ENCODE measurements at regions of chr5 and their contacts with region 1.

Region 1: DNA sequence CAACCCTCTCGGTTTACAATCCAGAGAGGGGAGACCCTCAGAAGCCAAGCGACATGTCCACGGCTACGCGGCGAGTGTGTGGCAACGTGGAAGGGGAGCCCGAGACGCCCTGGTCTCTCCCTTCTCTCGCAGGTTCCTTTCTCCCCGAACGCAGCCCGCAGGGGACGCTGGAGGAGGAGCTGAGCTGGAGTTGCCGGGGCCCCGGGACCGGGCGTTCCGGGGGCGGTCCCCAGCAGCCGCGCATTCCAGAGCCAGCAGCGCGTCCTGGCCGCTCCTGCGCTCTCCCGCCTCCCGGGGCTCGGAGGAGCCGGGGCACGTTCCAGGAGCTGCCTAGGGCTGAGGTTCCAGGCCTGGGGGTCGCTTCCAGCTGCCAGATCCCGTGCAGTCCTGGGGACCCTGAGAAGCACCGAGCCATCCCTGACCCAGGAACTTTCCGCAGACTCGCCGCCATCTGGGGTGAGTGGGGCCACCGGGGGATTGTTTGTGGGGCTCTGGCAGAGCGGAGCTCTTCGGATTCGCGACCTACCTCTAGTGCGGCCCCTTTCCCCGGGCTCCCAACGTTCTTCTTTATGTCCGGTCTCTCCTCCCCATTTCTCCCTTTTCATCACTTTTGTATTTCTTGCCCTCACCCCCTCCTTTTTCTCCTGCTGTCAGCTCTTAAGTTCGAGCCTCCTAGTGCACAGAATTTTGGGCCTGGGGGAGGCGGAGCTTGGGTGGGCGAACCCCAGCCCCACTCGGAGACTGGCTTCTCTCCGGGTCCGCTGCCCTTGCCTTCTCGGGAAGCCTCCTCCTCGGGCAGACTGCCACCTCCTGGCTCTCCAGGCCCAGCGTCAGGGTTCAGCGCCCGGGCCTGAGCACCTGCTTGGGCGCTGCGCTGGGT is at the start of gene SMIM3:
- DNase-seq: peak; percentile 84
- H3K4me3 ChIP-seq: peak within 1 kb of the TSS; percentile 67
- H3K27ac ChIP-seq: peak within 1 kb of the TSS; percentile 82
- H3K4me1 ChIP-seq: peaks cover 36% of the 10 kb centered on the region
- H3K27me3 ChIP-seq: no peaks in the 10 kb centered on the region
- CTCF ChIP-seq: peak; percentile 28
- total RNA-seq, gene SMIM3: 10.1 to 12.6 TPM

Region 2: DNA sequence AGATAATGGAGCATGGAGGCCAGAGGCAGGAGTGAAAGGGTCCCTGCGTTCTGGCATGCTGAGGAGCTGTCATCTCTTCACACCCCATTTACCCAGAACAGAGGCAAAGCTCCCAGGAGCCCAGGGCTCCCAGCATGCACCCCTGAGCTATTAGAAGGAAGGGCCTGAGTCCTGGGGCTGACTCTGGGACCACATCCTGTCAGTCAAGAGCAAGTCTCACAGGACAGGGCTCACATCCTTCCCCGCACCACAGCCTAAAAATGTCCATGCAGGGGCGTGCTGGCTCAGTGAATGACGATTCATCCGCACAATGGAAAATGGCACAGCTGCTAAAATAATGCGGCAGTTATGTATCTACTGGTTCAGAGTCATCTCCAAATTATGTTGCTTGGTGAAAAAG is 520.6 kb before region 1 on chr5:
- intact Hi-C with region 1: no loop called
- DNase-seq: no peak
- H3K4me3 ChIP-seq: no peak overlapping the region
- H3K27ac ChIP-seq: no peak overlapping the region
- H3K4me1 ChIP-seq: no peaks in the 10 kb centered on the region
- H3K27me3 ChIP-seq: no peaks in the 10 kb centered on the region
- CTCF ChIP-seq: no peak

Region 3: GRCh38 chr5:150700594-150701293 is 78.0 kb before region 1 on chr5 and contains the start of gene RBM22:
- intact Hi-C with region 1: loop called (anchors 5 kb)
- DNase-seq: peak; percentile 95
- H3K4me3 ChIP-seq: peak within 1 kb of the TSS; percentile 96
- H3K27ac ChIP-seq: peak within 1 kb of the TSS; percentile 93
- H3K4me1 ChIP-seq: peaks cover 9% of the 10 kb centered on the region
- H3K27me3 ChIP-seq: no peaks in the 10 kb centered on the region
- CTCF ChIP-seq: peak; percentile 60
- total RNA-seq, gene RBM22: 40.0 to 42.6 TPM